MCF 10A (cell line): ENCODE measurements at regions of chr5 and their contacts with region 1.

Region 1: GRCh38 chr5:77560677-77561263 is 68.7 kb upstream of the WDR41 start:
- DNase-seq: peak; percentile 52
- H3K4me3 Mint-ChIP-seq: no peak overlapping the region
- H3K27ac Mint-ChIP-seq: no peak overlapping the region
- H3K4me1 Mint-ChIP-seq: no peaks in the 10 kb centered on the region
- H3K27me3 Mint-ChIP-seq: no peaks in the 10 kb centered on the region
- CTCF ChIP-seq: peak; percentile 61

Region 2: DNA sequence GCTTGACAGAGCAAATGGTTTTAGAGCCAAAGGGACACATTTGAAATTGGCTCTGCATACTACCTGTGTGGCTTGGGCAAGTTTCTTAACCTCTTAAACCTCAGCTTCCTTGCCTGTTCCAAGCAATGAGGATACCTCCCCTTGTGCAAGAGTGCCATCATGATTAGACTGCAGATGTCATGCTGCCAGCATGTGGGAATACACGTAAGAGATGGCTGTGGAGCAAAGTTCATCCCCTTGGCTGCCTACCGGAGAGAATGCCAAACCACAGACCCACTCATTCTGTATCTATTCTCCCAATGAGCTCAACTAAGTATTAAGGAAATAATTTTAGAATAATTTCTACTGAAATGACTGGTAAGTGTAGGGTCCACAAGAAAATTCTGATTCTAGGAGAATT is 170.0 kb before region 1 on chr5:
- CTCF ChIA-PET with region 1: no interaction called
- POLR2A ChIA-PET with region 1: no interaction called
- intact Hi-C with region 1: no loop called
- DNase-seq: peak; percentile 63
- H3K4me3 Mint-ChIP-seq: no peak overlapping the region
- H3K27ac Mint-ChIP-seq: no peak overlapping the region
- H3K4me1 Mint-ChIP-seq: no peaks in the 10 kb centered on the region
- H3K27me3 Mint-ChIP-seq: no peaks in the 10 kb centered on the region
- CTCF ChIP-seq: no peak

Region 3: GRCh38 chr5:77867194-77867691 is 306.5 kb after region 1 on chr5:
- CTCF ChIA-PET with region 1: interaction called, 3 read pairs
- POLR2A ChIA-PET with region 1: no interaction called
- intact Hi-C with region 1: loop called (anchors 1 kb)
- DNase-seq: peak; percentile 27
- H3K4me3 Mint-ChIP-seq: no peak overlapping the region
- H3K27ac Mint-ChIP-seq: no peak overlapping the region
- H3K4me1 Mint-ChIP-seq: no peaks in the 10 kb centered on the region
- H3K27me3 Mint-ChIP-seq: no peaks in the 10 kb centered on the region
- CTCF ChIP-seq: peak; percentile 26

Region 4: GRCh38 chr5:78041805-78042204 is 481.0 kb after region 1 on chr5:
- CTCF ChIA-PET with region 1: no interaction called
- POLR2A ChIA-PET with region 1: no interaction called
- intact Hi-C with region 1: no loop called
- DNase-seq: no peak
- H3K4me3 Mint-ChIP-seq: no peak overlapping the region
- H3K27ac Mint-ChIP-seq: no peak overlapping the region
- H3K4me1 Mint-ChIP-seq: no peaks in the 10 kb centered on the region
- H3K27me3 Mint-ChIP-seq: no peaks in the 10 kb centered on the region
- CTCF ChIP-seq: no peak

Region 5: DNA sequence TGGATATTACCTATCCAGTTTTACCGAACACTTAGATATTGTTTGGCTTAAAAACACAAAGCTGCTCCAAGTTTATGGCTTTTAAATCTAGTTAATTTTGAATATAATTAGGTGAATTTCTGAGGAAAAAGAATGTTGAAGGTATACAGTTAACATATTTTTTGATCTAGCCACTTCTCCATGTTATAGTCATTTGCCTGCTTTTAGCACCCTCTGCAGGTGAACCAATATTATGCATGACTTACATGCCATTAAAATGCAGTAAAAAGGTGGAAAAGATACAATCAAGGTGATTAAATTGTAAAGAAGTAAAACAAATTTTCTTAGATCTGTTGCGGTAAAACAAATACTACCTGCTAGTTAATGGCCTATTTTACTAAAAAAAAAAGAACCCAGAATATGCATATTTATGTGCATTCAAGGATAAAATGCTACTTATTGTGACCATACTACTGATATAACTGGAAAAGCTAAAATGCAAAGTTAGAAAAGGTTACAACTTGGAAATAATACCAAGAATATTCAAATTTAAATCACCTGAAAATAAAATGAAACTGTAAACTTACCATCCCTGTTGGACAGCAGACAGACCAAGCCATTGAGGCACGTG is 601.6 kb after region 1 on chr5:
- CTCF ChIA-PET with region 1: no interaction called
- POLR2A ChIA-PET with region 1: no interaction called
- intact Hi-C with region 1: loop called (anchors 1 kb)
- DNase-seq: peak; percentile 55
- H3K4me3 Mint-ChIP-seq: no peak overlapping the region
- H3K27ac Mint-ChIP-seq: no peak overlapping the region
- H3K4me1 Mint-ChIP-seq: no peaks in the 10 kb centered on the region
- H3K27me3 Mint-ChIP-seq: no peaks in the 10 kb centered on the region
- CTCF ChIP-seq: peak; percentile 36

Region 6: GRCh38 chr5:78300464-78301045 is 739.8 kb after region 1 on chr5:
- CTCF ChIA-PET with region 1: no interaction called
- POLR2A ChIA-PET with region 1: no interaction called
- intact Hi-C with region 1: loop called (anchors 1 kb)
- DNase-seq: peak; percentile 38
- H3K4me3 Mint-ChIP-seq: no peak overlapping the region
- H3K27ac Mint-ChIP-seq: no peak overlapping the region
- H3K4me1 Mint-ChIP-seq: peaks cover 5% of the 10 kb centered on the region
- H3K27me3 Mint-ChIP-seq: no peaks in the 10 kb centered on the region
- CTCF ChIP-seq: peak; percentile 31